Left colon (tissue), 2 donors: ENCODE measurements at regions of chr3 and their contacts with region 1.

Region 1: DNA sequence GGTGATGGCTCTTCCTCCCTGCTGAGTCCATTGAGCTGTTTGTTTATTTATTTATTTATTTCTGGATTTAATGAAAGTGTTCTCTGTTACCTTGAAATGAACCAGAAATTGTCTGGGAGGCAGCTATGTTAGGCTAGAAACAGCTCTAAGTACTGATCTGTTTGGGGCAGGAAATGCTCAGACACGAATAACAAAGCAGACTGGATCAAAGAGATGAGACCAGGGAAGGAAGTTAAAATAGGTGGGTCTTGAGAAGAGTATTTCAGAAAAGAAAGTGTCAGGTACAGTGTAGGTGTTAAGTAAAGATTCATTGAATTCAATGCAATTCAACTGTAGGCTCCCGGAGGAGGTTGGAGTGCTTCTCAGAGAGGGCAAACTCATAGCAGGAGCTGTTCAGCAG is 173.3 kb downstream of the IL20RB start:
- DNase-seq: no peak
- ATAC-seq: no peak

Region 2: GRCh38 chr3:136893848-136894443 is 237.1 kb before region 1 on chr3:
- intact Hi-C with region 1: no loop called
- DNase-seq: no peak
- ATAC-seq: no peak

Region 3: DNA sequence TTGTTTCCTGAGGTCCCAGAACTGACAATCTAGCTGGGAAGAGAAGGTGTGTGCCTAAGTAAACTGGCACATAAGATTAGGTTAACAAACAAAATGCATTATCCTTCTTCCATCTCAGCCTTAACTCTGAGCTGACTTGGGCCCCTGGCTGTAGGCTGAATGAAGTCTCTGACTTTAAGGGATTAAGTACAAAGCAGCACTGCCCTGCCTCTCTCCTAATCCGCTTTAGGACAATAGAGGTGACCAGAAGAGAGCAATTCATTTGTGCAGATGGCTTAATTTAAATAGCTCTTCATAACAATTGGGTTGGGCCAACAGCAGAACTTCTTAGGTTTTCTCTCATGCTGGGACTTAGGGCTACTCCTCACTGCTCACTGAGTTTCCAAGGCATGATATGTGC is 451.4 kb after region 1 on chr3:
- intact Hi-C with region 1: loop called in 1 of 2 experiments (anchors 5 kb)
- DNase-seq: no peak
- ATAC-seq: no peak